ENCODE measurements at regions of chr7 and their contacts with region 1.

Region 1: DNA sequence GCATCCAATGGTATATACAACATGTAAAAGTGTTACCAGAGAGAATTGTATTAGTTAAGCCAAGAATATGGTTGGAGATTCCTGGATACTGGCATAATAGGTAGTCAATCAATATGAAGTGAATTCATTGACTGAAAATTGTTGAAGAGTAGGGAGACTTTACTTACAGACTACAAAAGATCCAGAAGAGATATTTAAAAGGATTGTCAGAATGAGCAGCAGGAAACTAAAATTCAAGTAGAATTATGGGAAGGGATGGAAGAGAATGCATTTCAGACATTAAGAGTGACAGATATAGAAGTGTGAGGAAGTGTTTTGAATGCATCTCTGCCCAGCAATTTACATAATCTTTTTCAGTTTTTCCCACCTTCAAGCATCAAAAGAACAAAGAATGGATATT is 62.3 kb upstream of the POM121L12 start:
- DNase-seq: no peak
- ATAC-seq: no peak
- H3K4me3 Mint-ChIP-seq: no peak overlapping the region
- H3K27ac Mint-ChIP-seq: no peak overlapping the region
- H3K4me1 Mint-ChIP-seq: no peaks in the 10 kb centered on the region
- H3K27me3 Mint-ChIP-seq: no peaks in the 10 kb centered on the region

Region 2: DNA sequence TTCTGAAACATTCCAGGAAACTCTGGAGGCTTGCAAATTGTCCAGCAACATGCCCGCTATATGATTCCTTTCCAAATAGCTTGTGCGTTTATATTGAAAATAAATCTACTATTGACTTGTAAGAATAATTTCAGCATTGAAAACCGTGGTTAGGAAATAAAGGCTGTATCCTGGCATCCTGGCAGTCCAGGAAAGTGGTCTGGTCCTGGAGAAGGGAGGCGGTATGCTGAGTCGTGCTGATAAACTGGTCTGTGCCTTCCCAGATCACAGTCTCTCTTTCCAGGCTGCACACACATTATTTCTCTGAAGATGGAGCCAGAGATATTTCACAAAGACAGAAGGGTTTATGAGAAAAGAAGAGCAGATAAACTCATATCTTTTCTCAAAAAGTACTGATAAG is 1306.4 kb before region 1 on chr7:
- CTCF ChIA-PET with region 1: no interaction called
- POLR2A ChIA-PET with region 1: no interaction called
- intact Hi-C with region 1: no loop called
- DNase-seq: no peak
- ATAC-seq: no peak
- H3K4me3 Mint-ChIP-seq: no peak overlapping the region
- H3K27ac Mint-ChIP-seq: no peak overlapping the region
- H3K4me1 Mint-ChIP-seq: no peaks in the 10 kb centered on the region
- H3K27me3 Mint-ChIP-seq: no peaks in the 10 kb centered on the region

Region 3: DNA sequence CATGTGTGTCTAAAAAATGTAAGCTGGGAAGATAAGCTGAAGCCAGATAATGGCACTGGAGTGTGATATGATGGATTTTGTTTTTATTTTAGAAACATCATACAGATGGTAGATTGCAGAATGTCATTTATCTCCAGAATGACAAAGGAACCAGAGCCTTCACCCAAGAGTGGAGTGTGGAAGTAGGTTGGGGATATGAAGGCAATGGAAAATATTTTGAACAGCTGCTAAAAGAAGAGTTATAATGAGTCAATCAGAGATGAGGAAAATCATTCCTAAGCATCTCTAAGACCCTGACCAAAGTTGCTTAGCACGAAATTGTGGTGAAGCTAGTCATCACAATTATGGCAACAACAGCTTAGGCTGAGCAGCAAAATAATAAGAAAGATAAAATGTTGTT is 22.6 kb after region 1 on chr7:
- CTCF ChIA-PET with region 1: no interaction called
- POLR2A ChIA-PET with region 1: no interaction called
- intact Hi-C with region 1: loop called in 1 of 2 experiments (anchors 1 kb)
- DNase-seq: no peak
- ATAC-seq: no peak
- H3K4me3 Mint-ChIP-seq: no peak overlapping the region
- H3K27ac Mint-ChIP-seq: no peak overlapping the region
- H3K4me1 Mint-ChIP-seq: no peaks in the 10 kb centered on the region
- H3K27me3 Mint-ChIP-seq: no peaks in the 10 kb centered on the region